ENCODE measurements at regions of chr1 and their contacts with region 1.

Region 1: GRCh38 chr1:183370399-183371058 is 47.7 kb downstream of the NMNAT2 start:
- DNase-seq: no peak
- H3K4me3 ChIP-seq: no peak overlapping the region
- H3K27ac ChIP-seq: no peak overlapping the region
- H3K4me1 ChIP-seq: no peaks in the 10 kb centered on the region
- H3K27me3 ChIP-seq: no peaks in the 10 kb centered on the region
- CTCF ChIP-seq: no peak

Region 2: GRCh38 chr1:183416850-183417771 is 46.6 kb after region 1 on chr1:
- intact Hi-C with region 1: no loop called
- DNase-seq: peak in 1 of 2 donors; percentile 74
- H3K4me3 ChIP-seq: peak overlapping the region; percentile 50 to 60
- H3K27ac ChIP-seq: no peak overlapping the region
- H3K4me1 ChIP-seq: peaks cover 5 to 13% of the 10 kb centered on the region in 2 donors
- H3K27me3 ChIP-seq: peaks cover 10% of the 10 kb centered on the region
- CTCF ChIP-seq: no peak

Region 3: DNA sequence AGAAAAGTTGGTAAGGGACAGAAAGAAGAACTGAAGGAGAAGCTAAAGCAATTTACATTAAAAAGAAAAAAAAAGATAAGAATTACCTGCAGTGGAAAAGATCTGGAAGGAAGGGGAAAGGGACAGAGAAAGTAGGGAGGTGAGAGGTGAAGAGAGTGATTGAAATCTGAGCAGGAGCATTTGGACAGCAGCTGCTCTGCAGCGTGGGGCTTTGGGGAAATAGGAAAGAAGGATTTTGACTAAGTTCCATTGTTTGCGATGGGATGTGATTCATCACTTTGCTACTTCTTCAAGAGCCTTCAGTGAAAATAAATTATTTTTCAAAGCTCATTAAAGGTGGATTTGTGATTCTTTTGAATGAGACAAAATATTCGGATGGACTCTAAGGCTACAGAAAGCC is 73.7 kb after region 1 on chr1:
- intact Hi-C with region 1: loop called (anchors 10 kb)
- DNase-seq: no peak
- H3K4me3 ChIP-seq: no peak overlapping the region
- H3K27ac ChIP-seq: no peak overlapping the region
- H3K4me1 ChIP-seq: no peaks in the 10 kb centered on the region
- H3K27me3 ChIP-seq: no peaks in the 10 kb centered on the region
- CTCF ChIP-seq: no peak

Region 4: DNA sequence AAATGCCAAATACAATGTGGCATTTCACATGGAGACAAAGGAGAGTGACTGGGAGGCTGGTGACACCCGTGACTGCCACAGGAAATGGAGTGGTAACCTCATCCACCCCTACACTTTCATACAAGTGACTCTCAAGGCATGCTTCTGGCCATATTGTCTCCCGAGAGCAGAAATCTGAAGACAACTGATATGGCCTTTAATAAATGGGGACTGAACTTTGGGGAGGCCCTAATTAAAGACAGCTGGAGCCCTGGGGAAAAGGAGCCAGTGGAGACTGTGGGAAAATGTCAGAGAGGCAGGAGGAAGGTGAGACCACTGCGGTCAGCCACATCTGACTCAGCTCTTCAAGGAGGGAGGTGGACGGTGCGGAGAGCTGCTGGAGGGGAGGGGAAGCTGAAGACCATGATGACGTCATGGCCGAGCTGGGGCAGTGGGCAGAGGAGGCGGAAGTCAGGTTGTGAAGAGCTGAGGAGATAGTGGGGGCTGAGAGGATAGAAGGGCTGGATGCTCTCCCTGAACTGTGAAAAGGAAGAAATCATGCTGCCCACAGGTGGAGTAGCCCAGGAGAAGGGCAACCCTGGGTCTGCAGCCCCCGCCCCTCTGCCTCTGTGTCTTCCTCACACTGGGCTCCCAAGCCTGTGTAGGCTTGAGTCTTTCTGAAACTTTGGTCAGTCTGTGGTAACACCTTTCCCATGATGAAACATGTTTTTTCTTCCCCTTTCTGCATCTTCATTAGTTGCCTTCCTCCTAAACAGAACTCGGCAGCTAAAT is 233.7 kb after region 1 on chr1:
- intact Hi-C with region 1: no loop called
- DNase-seq: peak in 1 of 2 donors; percentile 65
- H3K4me3 ChIP-seq: no peak overlapping the region
- H3K27ac ChIP-seq: peak overlapping the region in 1 of 2 donors; percentile 8
- H3K4me1 ChIP-seq: peaks cover 0 to 9% of the 10 kb centered on the region in 2 donors
- H3K27me3 ChIP-seq: no peaks in the 10 kb centered on the region
- CTCF ChIP-seq: no peak